SK-MEL-5 (cell line): ENCODE measurements at regions of chr5 and their contacts with region 1.

Region 1: GRCh38 chr5:159156426-159157238 is 52.7 kb downstream of the RNF145 start:
- DNase-seq: peak; percentile 76

Region 2: DNA sequence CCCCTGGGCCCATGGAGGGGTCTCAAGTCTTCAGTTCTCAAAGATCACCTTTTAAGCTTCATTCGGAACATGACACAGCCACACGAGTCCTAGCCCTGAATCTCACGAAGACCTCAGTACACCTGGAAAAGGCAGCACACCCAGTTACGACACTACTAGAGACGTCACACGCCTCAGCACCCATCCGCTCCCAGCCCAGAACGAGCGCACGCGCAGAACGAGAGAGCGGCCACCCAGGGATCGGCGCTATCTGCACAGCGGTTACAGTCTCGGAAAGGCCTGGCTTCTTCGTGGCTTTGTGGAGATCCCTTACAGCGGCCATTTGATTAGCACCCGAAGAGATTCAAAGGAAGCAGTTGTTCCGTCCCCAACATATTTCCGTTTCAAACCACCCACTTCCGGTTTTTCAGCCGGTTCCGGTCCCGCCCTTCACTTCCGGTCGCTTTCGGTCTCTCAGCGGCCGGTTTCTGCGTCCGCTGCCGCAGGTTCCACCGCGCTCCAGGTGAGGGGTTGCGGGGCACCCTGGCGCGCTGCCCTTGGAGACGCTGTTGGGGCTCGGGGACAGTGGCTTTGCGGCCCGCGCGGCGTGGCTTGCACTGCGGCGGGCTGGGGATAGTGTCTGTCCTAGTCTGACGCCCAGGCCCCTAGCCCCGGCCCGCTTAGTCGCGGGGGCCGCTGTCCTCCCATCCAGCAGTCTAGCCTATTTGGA is 106.4 kb after region 1 on chr5 and contains the start of gene UBLCP1:
- in situ Hi-C with region 1: loop called (anchors 25 kb)
- DNase-seq: peak; percentile 80
- total RNA-seq, gene UBLCP1: 44.0 and 45.7 TPM in 2 replicates